Panc1 (cell line): ENCODE measurements at regions of chr4 and their contacts with region 1.

Region 1: GRCh38 chr4:182938205-182938645 is 21.0 kb upstream of the DCTD start:
- DNase-seq: peak; percentile 51
- ATAC-seq: peak; percentile 100
- H3K4me3 ChIP-seq: no peak overlapping the region
- H3K27ac ChIP-seq: peak overlapping the region; percentile 74; the same call in 1 of the 2 replicates
- H3K4me1 ChIP-seq: peaks cover 6% of the 10 kb centered on the region
- H3K27me3 ChIP-seq: no peaks in the 10 kb centered on the region
- CTCF ChIP-seq: peak; percentile 91

Region 2: DNA sequence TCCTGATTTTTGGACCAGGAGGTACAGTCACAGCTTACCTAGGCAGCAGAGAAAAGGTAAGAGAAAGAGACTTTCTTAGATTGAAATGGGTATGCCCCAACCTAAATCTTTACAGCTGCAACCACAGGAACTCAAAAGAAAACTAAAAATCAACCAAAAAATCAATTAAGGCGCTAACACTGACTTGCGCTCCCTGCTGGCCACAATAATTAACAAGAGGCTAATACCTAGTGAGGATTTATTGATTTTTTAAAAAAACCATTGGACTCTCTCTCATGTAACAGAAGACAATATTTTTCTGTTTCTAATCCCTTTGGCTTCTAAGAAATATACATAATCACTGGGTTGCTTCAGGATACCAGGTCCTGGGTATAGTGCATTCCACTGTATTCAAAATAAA is 848.9 kb before region 1 on chr4:
- CTCF ChIA-PET with region 1: no interaction called
- POLR2A ChIA-PET with region 1: no interaction called
- in situ Hi-C with region 1: no loop called
- intact Hi-C with region 1: no loop called
- DNase-seq: no peak
- ATAC-seq: no peak
- H3K4me3 ChIP-seq: no peak overlapping the region
- H3K27ac ChIP-seq: no peak overlapping the region
- H3K4me1 ChIP-seq: no peaks in the 10 kb centered on the region
- H3K27me3 ChIP-seq: no peaks in the 10 kb centered on the region
- CTCF ChIP-seq: peak; percentile 21; the same call in 1 of the 2 replicates

Region 3: DNA sequence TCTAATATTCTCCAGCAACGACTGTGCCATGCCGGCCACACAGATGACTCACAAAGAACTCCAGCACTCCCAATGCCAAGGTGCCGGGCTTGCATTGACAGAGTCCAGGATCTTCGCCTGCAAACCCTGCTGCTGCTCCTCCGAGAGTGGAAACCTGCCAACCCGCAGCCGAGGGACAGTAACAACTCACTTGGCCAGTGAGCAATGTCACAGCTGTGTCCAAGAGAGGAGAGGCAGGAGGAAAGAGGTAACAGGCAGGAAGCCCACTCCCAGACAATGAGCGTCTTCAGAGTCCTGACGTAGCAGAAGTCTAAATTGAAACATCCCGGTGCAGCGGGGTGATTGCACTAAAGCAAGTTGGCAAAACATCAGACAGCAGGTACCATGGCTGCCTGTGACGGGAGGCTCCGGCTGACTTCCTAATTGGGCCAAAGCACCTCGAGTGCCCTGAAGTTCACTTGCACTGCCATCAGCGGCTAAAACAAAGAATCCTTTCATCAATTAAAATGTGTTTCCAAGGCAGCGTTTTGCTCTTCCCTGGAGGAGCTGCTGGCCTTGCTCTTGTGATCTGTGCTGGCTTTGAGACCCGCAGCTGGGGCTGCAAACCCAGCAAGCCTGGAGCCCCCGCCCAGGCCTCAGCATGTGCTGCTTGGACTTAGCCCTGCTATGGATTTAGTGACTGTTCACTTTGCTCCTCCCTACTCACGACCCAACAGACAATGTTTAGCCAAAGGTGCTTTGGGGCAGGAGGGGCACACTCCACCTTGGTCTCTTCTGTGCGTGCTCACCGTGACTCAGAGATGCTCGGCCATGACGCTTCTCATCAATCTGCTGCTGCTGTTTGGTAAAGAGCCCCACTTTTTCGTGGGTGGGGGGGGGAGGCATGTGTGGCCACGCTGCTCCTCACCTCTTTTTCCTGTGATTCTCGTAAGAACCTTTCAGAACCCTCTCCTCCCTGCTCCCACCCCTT is 57.6 kb before region 1 on chr4:
- CTCF ChIA-PET with region 1: no interaction called
- POLR2A ChIA-PET with region 1: no interaction called
- in situ Hi-C with region 1: no loop called
- intact Hi-C with region 1: no loop called
- DNase-seq: no peak
- ATAC-seq: no peak
- H3K4me3 ChIP-seq: no peak overlapping the region
- H3K27ac ChIP-seq: no peak overlapping the region
- H3K4me1 ChIP-seq: no peaks in the 10 kb centered on the region
- H3K27me3 ChIP-seq: no peaks in the 10 kb centered on the region
- CTCF ChIP-seq: no peak

Region 4: GRCh38 chr4:183035726-183036415 is 97.6 kb after region 1 on chr4:
- CTCF ChIA-PET with region 1: interaction called, 10 read pairs
- POLR2A ChIA-PET with region 1: no interaction called
- in situ Hi-C with region 1: no loop called
- intact Hi-C with region 1: no loop called
- DNase-seq: no peak
- ATAC-seq: no peak
- H3K4me3 ChIP-seq: no peak overlapping the region
- H3K27ac ChIP-seq: no peak overlapping the region
- H3K4me1 ChIP-seq: no peaks in the 10 kb centered on the region
- H3K27me3 ChIP-seq: no peaks in the 10 kb centered on the region
- CTCF ChIP-seq: no peak

Region 5: GRCh38 chr4:183059797-183060196 is 121.6 kb after region 1 on chr4:
- CTCF ChIA-PET with region 1: no interaction called
- POLR2A ChIA-PET with region 1: no interaction called
- in situ Hi-C with region 1: no loop called
- intact Hi-C with region 1: no loop called
- DNase-seq: no peak
- ATAC-seq: no peak
- H3K4me3 ChIP-seq: no peak overlapping the region
- H3K27ac ChIP-seq: no peak overlapping the region
- H3K4me1 ChIP-seq: no peaks in the 10 kb centered on the region
- H3K27me3 ChIP-seq: no peaks in the 10 kb centered on the region
- CTCF ChIP-seq: no peak

Region 6: GRCh38 chr4:183261953-183262775 is 323.9 kb after region 1 on chr4:
- CTCF ChIA-PET with region 1: interaction called, 5 read pairs
- POLR2A ChIA-PET with region 1: no interaction called
- in situ Hi-C with region 1: no loop called
- intact Hi-C with region 1: loop called (anchors 5 kb)
- DNase-seq: no peak
- ATAC-seq: peak; percentile 89
- H3K4me3 ChIP-seq: no peak overlapping the region
- H3K27ac ChIP-seq: peak overlapping the region; percentile 66
- H3K4me1 ChIP-seq: peaks cover 12% of the 10 kb centered on the region
- H3K27me3 ChIP-seq: no peaks in the 10 kb centered on the region
- CTCF ChIP-seq: peak; percentile 77